Ascending aorta (tissue), 2 donors: ENCODE measurements at regions of chr2 and their contacts with region 1.

Region 1: GRCh38 chr2:101697124-101698013 is at the start of gene MAP4K4:
- DNase-seq: peak in 1 of 2 donors; percentile 85
- H3K4me3 ChIP-seq: peak within 1 kb of the TSS; percentile 79 to 90
- H3K27ac ChIP-seq: peak within 1 kb of the TSS; percentile 88 to 90
- H3K4me1 ChIP-seq: peaks cover 0 to 17% of the 10 kb centered on the region in 2 donors
- H3K27me3 ChIP-seq: no peaks in the 10 kb centered on the region
- CTCF ChIP-seq: peak in 2 of 3 experiments; percentile 9 to 28
- total RNA-seq, gene MAP4K4: 48.0 TPM

Region 2: GRCh38 chr2:101518578-101519492 is 178.5 kb before region 1 on chr2:
- intact Hi-C with region 1: loop called (anchors 5 kb)
- DNase-seq: no peak
- H3K4me3 ChIP-seq: no peak overlapping the region
- H3K27ac ChIP-seq: no peak overlapping the region
- H3K4me1 ChIP-seq: peaks cover 0 to 13% of the 10 kb centered on the region in 2 donors
- H3K27me3 ChIP-seq: no peaks in the 10 kb centered on the region
- CTCF ChIP-seq: peak in 1 of 3 experiments; percentile 56

Region 3: DNA sequence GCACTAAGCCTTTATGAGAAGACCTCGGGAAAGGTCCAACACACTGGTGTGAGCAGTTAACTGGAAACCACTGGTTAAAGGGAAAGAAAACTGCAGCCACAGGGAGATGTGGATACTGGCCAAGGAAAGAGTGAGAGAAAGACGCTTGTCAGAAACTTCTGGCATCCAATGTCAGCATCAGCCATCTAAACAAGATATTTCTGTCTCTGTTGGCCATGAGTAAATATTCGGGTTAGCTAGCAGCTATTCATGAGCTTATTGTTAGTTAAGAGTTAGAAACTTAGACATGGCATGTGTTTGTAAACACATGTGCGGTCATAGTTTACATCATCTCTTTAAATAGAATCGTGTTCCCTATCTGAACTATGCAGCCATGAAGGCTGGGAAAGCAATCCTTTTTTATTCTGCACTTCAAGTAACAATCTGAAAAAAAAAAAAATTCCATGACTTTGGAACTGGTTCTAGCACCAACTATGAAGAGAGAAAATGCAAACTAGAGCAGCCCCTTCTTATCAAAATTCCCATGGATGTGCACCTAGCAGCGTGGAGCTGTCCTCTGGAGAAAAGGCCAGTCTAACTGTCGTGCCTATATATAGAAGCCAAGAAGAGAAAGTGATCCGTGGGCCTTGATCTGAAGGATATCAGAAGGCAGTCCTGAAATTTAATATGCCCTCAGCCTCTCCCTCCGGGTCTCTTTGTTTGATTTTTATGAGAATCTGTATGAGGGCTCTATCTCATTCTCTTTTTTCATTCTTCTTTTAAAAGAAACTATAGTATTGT is 138.4 kb before region 1 on chr2:
- intact Hi-C with region 1: loop called (anchors 5 kb)
- DNase-seq: no peak
- H3K4me3 ChIP-seq: peak overlapping the region; percentile 16 to 31
- H3K27ac ChIP-seq: peak overlapping the region; percentile 81 to 86
- H3K4me1 ChIP-seq: peaks cover 4 to 15% of the 10 kb centered on the region in 2 donors
- H3K27me3 ChIP-seq: no peaks in the 10 kb centered on the region
- CTCF ChIP-seq: no peak

Region 4: DNA sequence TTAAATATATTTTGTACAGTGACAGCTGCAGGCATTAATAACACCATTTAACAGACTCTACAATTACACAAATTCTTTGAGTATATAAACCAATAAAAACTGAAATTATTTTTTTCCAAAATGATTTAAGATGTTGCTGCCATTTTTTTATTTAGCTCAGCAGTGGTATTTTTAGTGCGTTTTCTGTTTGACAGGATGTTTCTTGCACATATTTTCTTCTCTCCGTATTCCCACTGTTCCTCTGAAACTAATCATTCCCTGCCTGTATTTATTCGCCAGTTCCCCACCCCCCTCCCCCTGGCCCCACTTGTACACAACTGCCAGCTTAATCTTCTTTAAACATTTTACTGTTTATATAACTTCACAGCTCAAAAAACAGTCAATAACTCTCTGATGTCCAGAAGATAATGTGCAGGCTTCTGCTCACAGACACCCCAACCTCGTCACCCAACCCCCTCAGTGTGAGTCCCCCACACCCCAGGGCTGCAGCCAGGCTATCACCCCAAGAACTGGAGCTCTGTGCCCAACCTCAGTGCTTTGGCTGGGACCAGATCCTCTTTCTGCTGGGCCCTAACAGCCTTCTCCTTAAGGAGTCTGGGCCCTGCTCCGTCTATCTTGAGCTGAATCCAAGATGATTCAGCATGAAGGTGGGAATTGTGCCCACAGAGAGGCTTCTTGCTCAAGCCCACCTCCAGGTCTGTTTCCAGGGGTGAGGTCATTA is 41.5 kb before region 1 on chr2:
- intact Hi-C with region 1: loop called (anchors 5 kb)
- DNase-seq: peak in 1 of 2 donors; percentile 71
- H3K4me3 ChIP-seq: no peak overlapping the region
- H3K27ac ChIP-seq: peak overlapping the region; percentile 39 to 69
- H3K4me1 ChIP-seq: peaks cover 0 to 4% of the 10 kb centered on the region in 2 donors
- H3K27me3 ChIP-seq: no peaks in the 10 kb centered on the region
- CTCF ChIP-seq: no peak

Region 5: DNA sequence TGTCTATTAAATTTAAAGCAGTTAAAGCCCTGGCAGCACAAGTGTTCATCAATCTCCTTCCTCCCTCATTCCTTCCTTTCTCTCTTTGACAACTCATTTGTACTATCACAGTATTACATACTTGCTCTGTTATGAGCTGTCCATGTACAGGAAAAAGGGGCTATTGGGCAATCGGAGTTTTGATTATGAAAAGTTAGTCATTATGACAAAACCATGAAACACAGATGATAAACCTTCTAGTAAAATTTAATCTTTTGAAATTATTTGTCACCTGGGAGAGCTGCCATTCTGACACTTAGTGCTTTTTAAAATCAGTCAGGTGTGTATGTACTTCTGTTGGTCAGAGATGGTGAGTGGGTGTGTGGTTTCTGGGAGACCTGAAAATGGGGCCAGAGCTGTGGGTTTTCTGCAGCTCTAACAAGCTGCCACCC is 39.5 kb after region 1 on chr2:
- intact Hi-C with region 1: loop called (anchors 2 kb)
- DNase-seq: no peak
- H3K4me3 ChIP-seq: no peak overlapping the region
- H3K27ac ChIP-seq: peak overlapping the region; percentile 54 to 55
- H3K4me1 ChIP-seq: peaks cover 10 to 53% of the 10 kb centered on the region in 2 donors
- H3K27me3 ChIP-seq: no peaks in the 10 kb centered on the region
- CTCF ChIP-seq: no peak

Region 6: DNA sequence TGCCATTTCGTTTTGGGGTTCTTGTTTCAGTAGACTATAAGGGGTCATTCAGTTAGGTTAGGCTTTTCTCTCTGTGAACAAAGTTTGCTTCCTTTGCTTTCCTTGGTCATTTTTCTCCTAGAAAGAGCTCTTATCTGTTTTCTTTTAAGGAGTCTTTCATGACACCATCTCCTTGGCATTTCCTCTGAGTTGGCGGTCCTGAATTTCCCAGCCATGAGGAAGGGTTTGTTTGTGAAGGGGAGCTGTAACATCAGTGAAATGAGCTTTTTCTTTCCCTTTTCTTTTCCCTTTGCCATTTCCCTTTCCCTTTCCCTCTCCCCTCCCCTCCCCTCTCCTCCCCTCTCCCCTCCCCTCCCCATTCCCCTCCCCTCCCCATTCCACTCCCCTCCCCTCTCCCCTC is 61.8 kb after region 1 on chr2:
- intact Hi-C with region 1: loop called (anchors 2 kb)
- DNase-seq: peak in 1 of 2 donors; percentile 83
- H3K4me3 ChIP-seq: no peak overlapping the region
- H3K27ac ChIP-seq: peak overlapping the region; percentile 55 to 64
- H3K4me1 ChIP-seq: peaks cover 13 to 45% of the 10 kb centered on the region in 2 donors
- H3K27me3 ChIP-seq: no peaks in the 10 kb centered on the region
- CTCF ChIP-seq: no peak

Region 7: GRCh38 chr2:101831351-101831865 is 134.0 kb after region 1 on chr2:
- intact Hi-C with region 1: loop called (anchors 2 kb)
- DNase-seq: peak in 1 of 2 donors; percentile 89
- H3K4me3 ChIP-seq: no peak overlapping the region
- H3K27ac ChIP-seq: peak overlapping the region; percentile 30 to 56
- H3K4me1 ChIP-seq: peaks cover 0 to 28% of the 10 kb centered on the region in 2 donors
- H3K27me3 ChIP-seq: no peaks in the 10 kb centered on the region
- CTCF ChIP-seq: peak; percentile 63 to 76 (median 72)